Activated CD8-positive, alpha-beta T cell treated with anti-CD3 and anti-CD28 coated beads for 36 hours (primary cell): ENCODE measurements at regions of chr13 and their contacts with region 1.

Region 1: DNA sequence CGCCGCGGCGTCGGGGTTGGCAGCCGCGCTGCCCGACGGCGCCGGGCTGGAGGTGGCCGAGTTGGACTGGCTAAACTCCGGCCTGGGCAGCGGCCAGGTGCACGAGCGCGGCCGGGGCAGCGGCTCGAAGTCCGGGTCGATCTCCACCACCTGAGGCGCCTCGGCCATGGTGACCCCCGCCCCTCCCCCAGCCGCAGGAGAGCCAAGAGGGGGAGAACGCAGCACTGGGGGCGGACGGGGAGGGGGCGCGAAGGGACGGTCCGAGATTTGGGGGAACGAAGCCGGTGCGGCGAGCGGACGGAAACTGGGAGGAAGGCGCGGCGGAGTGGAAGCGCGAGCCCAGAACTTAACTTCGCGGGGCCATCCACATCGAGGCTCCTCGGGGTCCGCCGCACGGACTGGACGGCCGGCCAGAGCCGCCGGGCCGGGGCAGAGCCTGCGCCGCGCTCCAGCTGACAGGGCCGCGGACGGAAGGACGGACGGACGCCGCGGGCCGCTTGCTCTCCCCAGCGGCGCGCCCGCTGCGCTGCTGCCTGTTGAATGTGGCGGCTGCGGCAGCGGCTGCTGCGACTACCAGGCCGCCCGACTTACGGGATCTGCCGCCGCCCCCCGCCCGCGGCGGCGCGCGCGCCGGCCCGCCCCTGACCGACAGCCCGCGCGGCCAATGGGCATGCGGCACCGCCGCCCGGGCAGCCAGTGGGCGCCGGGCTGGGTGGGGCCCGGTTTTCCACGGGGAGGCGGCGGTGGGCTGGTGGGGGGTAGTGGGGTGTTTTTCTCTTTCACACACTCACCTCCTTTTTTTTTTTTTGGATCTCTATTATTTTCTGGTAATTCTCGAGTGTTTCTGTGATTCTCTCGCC is at the start of gene FOXO1:
- DNase-seq: peak; percentile 84
- ATAC-seq: peak; percentile 72
- H3K4me3 Mint-ChIP-seq: peak within 1 kb of the TSS; percentile 85
- H3K27ac Mint-ChIP-seq: peak within 1 kb of the TSS; percentile 96
- H3K4me1 Mint-ChIP-seq: peaks cover 36% of the 10 kb centered on the region
- H3K27me3 Mint-ChIP-seq: no peaks in the 10 kb centered on the region
- CTCF ChIP-seq: no peak
- total RNA-seq, gene FOXO1: 30.6 to 30.8 TPM

Region 2: GRCh38 chr13:40181203-40181845 is 485.0 kb before region 1 on chr13:
- CTCF ChIA-PET with region 1: no interaction called
- POLR2A ChIA-PET with region 1: no interaction called
- intact Hi-C with region 1: loop called (anchors 10 kb)
- DNase-seq: no peak
- ATAC-seq: peak; percentile 25
- H3K4me3 Mint-ChIP-seq: no peak overlapping the region
- H3K27ac Mint-ChIP-seq: no peak overlapping the region
- H3K4me1 Mint-ChIP-seq: peaks cover 51% of the 10 kb centered on the region
- H3K27me3 Mint-ChIP-seq: no peaks in the 10 kb centered on the region
- CTCF ChIP-seq: no peak

Region 3: GRCh38 chr13:40485611-40486517 is 180.4 kb before region 1 on chr13:
- CTCF ChIA-PET with region 1: interaction called, 3 read pairs
- POLR2A ChIA-PET with region 1: interaction called, 9 read pairs
- intact Hi-C with region 1: loop called (anchors 2 kb)
- DNase-seq: peak; percentile 83
- ATAC-seq: peak; percentile 91
- H3K4me3 Mint-ChIP-seq: peak overlapping the region; percentile 24
- H3K27ac Mint-ChIP-seq: peak overlapping the region; percentile 92
- H3K4me1 Mint-ChIP-seq: peaks cover 80% of the 10 kb centered on the region
- H3K27me3 Mint-ChIP-seq: no peaks in the 10 kb centered on the region
- CTCF ChIP-seq: no peak

Region 4: GRCh38 chr13:40598569-40598968 is 67.7 kb before region 1 on chr13:
- CTCF ChIA-PET with region 1: interaction called, 10 read pairs
- POLR2A ChIA-PET with region 1: interaction called, 12 read pairs
- intact Hi-C with region 1: no loop called
- DNase-seq: no peak
- ATAC-seq: no peak
- H3K4me3 Mint-ChIP-seq: peak overlapping the region; percentile 62
- H3K27ac Mint-ChIP-seq: peak overlapping the region; percentile 94
- H3K4me1 Mint-ChIP-seq: peaks cover 91% of the 10 kb centered on the region
- H3K27me3 Mint-ChIP-seq: no peaks in the 10 kb centered on the region
- CTCF ChIP-seq: no peak

Region 5: DNA sequence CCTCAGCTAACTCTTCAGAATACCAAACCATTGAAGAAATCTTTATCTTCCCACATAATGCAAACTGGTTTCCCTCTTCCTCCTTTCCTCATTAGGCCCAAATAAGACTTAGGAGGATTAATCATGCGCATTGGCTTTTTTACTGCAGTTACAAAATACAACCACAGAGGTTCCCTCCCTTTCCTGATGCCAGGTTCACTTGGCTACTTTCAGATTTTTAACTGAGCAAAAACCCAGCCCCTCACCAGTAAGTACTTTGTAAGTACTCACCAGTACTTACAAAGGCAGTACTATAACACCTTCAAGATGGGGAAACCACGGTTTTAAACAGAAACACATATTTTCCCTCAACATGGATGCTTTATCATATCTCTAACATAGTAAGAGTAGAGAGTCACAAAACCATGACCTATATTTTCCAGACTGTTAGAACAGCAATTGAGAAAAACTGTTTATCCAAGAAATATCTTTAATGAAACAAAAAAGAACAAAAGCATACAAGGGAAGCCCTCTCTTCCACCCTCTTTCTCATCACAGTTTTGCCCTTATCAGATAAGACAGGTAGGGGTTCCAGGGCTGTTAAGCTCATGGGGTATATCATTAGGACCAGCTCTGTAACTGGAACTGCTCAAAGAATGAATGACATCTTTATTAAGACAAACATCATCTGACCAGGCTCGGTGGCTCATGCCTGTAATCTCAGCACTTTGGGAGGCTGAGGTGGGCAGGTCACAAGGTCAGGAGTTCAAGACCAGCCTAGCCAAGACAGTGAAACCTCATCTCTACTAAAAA is 12.6 kb before region 1 on chr13:
- CTCF ChIA-PET with region 1: interaction called, 4 read pairs
- POLR2A ChIA-PET with region 1: interaction called, 7 read pairs
- intact Hi-C with region 1: loop called (anchors 1 kb)
- DNase-seq: peak; percentile 46
- ATAC-seq: peak; percentile 84
- H3K4me3 Mint-ChIP-seq: peak overlapping the region; percentile 60
- H3K27ac Mint-ChIP-seq: peak overlapping the region; percentile 96
- H3K4me1 Mint-ChIP-seq: peaks cover 92% of the 10 kb centered on the region
- H3K27me3 Mint-ChIP-seq: no peaks in the 10 kb centered on the region
- CTCF ChIP-seq: no peak

Region 6: GRCh38 chr13:40770934-40771618 is 104.8 kb after region 1 on chr13 and contains the start of gene MRPS31:
- CTCF ChIA-PET with region 1: interaction called, 13 read pairs
- POLR2A ChIA-PET with region 1: no interaction called
- intact Hi-C with region 1: loop called (anchors 10 kb)
- DNase-seq: peak; percentile 96
- ATAC-seq: peak; percentile 99
- H3K4me3 Mint-ChIP-seq: peak within 1 kb of the TSS; percentile 97
- H3K27ac Mint-ChIP-seq: peak within 1 kb of the TSS; percentile 94
- H3K4me1 Mint-ChIP-seq: peaks cover 43% of the 10 kb centered on the region
- H3K27me3 Mint-ChIP-seq: no peaks in the 10 kb centered on the region
- CTCF ChIP-seq: no peak
- total RNA-seq, gene MRPS31: 41.0 to 44.7 TPM